CD4-positive, alpha-beta memory T cell (primary cell): ENCODE measurements at regions of chr6 and their contacts with region 1.

Region 1: DNA sequence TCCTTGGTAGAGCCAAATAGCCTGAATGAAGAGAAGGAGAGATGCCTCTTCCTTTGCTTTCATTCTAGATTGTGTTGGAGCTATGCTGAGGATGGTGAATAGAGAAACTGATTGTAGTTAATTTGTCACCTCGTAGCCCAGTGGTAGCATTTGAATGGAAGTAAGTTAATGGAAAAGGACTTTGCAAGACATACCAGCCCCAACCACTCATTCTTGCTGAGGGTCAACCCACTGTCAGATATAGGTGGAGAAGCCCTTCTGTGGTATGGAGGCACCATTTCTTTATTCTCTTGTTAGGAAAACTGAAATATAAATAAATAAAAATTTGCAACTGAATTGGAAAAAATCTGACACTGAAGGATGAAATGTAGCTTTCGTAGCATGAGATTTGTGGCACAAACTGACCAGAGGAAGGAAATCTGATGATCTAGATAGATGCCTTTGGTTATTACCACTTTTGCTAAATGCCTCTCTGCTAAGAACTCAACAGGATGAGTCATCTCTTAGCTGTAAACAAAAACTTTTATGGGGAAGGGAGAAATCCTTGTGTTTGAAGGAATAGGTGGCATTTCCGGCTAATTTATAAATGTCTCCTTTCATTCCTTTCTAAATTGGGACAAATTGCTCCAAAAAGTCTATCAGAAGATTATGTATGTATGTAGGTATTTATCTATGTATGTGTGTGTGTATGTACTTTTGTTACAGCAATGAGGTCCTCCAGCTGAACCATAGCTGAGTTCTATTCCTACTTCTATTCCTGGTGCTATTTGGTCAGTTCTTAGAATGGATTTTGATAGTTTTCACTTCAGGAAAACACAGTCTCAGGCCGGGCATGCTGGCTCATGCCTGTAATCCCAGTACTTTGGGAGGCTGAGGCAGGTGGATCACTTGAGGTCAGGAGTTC is 76.5 kb upstream of the SUPT3H start:
- DNase-seq: no peak
- H3K4me3 ChIP-seq: no peak overlapping the region
- H3K4me3 Mint-ChIP-seq: peak overlapping the region in 4 of 8 donors; percentile 6 to 37 (median 22)
- H3K27ac ChIP-seq: no peak overlapping the region
- H3K27ac Mint-ChIP-seq: peak overlapping the region in 4 of 7 donors; percentile 4 to 35 (median 13)
- H3K4me1 ChIP-seq: peaks cover 56% of the 10 kb centered on the region
- H3K4me1 Mint-ChIP-seq: peaks cover 46 to 66% (median 55%) of the 10 kb centered on the region in 4 donors
- H3K27me3 ChIP-seq: no peaks in the 10 kb centered on the region
- H3K27me3 Mint-ChIP-seq: no peaks in the 10 kb centered on the region

Region 2: GRCh38 chr6:45436544-45437438 is 17.5 kb before region 1 on chr6:
- CTCF ChIA-PET with region 1: interaction called, 3 read pairs
- POLR2A ChIA-PET with region 1: interaction called, 5 read pairs
- intact Hi-C with region 1: loop called (anchors 2 kb)
- DNase-seq: peak in 4 of 5 donors; percentile 18 to 51 (median 30)
- H3K4me3 ChIP-seq: no peak overlapping the region
- H3K4me3 Mint-ChIP-seq: peak overlapping the region; percentile 12 to 85 (median 63)
- H3K27ac ChIP-seq: peak overlapping the region; percentile 11
- H3K27ac Mint-ChIP-seq: peak overlapping the region; percentile 6 to 89 (median 65)
- H3K4me1 ChIP-seq: peaks cover 97% of the 10 kb centered on the region
- H3K4me1 Mint-ChIP-seq: peaks cover 62 to 92% (median 68%) of the 10 kb centered on the region in 4 donors
- H3K27me3 ChIP-seq: no peaks in the 10 kb centered on the region
- H3K27me3 Mint-ChIP-seq: no peaks in the 10 kb centered on the region

Region 3: DNA sequence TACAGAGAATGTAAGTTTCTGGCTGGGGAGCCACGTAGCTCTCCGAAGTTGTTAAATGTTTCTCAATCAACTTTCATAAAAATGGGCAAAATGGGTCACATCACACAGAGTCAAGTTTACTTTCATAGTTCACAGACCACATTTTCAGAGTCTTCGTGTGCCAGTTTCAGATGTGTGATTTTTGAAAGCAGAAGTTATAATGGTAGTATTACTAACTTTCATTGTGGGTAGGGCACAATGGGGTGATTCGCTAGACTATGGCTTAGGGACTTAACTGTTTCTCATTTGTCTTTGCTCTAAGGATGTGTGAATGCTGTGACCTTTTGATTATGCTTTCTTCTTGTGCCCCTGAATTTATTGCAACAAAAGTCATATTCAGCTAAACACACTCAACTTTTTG is 32.5 kb after region 1 on chr6:
- CTCF ChIA-PET with region 1: interaction called, 4 read pairs
- POLR2A ChIA-PET with region 1: no interaction called
- intact Hi-C with region 1: loop called (anchors 5 kb)
- DNase-seq: no peak
- H3K4me3 ChIP-seq: no peak overlapping the region
- H3K4me3 Mint-ChIP-seq: peak overlapping the region in 4 of 8 donors; percentile 11 to 49 (median 26)
- H3K27ac ChIP-seq: no peak overlapping the region
- H3K27ac Mint-ChIP-seq: peak overlapping the region in 6 of 7 donors; percentile 4 to 66 (median 32)
- H3K4me1 ChIP-seq: peaks cover 37% of the 10 kb centered on the region
- H3K4me1 Mint-ChIP-seq: peaks cover 34 to 71% (median 64%) of the 10 kb centered on the region in 4 donors
- H3K27me3 ChIP-seq: no peaks in the 10 kb centered on the region
- H3K27me3 Mint-ChIP-seq: no peaks in the 10 kb centered on the region